ENCODE measurements at regions of chr11 and their contacts with region 1.

Region 1: GRCh38 chr11:62965574-62965973 is 19.2 kb downstream of the SLC22A6 start:
- DNase-seq: no peak
- ATAC-seq: no peak

Region 2: GRCh38 chr11:62984246-62985017 is 18.9 kb after region 1 on chr11 and contains the start of gene SLC22A6:
- intact Hi-C with region 1: loop called (anchors 1 kb)
- DNase-seq: no peak
- ATAC-seq: no peak
- total RNA-seq, gene SLC22A6: not detected

Region 3: GRCh38 chr11:63080682-63081081 is 115.1 kb after region 1 on chr11:
- intact Hi-C with region 1: no loop called
- DNase-seq: no peak
- ATAC-seq: no peak

Measured in sciatic nerve (tissue), 2 donors.